Activated CD4-positive, alpha-beta memory T cell treated with anti-CD3 and anti-CD28 coated beads for 36 hours (primary cell): ENCODE measurements at regions of chr3 and their contacts with region 1.

Region 1: GRCh38 chr3:106013971-106014370 is 145.2 kb upstream of the CBLB start:
- DNase-seq: no peak
- H3K4me3 Mint-ChIP-seq: no peak overlapping the region
- H3K27ac Mint-ChIP-seq: peak overlapping the region; percentile 30
- H3K4me1 Mint-ChIP-seq: peaks cover 41% of the 10 kb centered on the region
- H3K27me3 Mint-ChIP-seq: no peaks in the 10 kb centered on the region

Region 2: GRCh38 chr3:105353485-105354161 is 660.3 kb before region 1 on chr3:
- CTCF ChIA-PET with region 1: no interaction called
- POLR2A ChIA-PET with region 1: no interaction called
- intact Hi-C with region 1: no loop called
- DNase-seq: no peak
- H3K4me3 Mint-ChIP-seq: peak overlapping the region; percentile 20
- H3K27ac Mint-ChIP-seq: no peak overlapping the region
- H3K4me1 Mint-ChIP-seq: peaks cover 11% of the 10 kb centered on the region
- H3K27me3 Mint-ChIP-seq: peaks cover 36% of the 10 kb centered on the region

Region 3: GRCh38 chr3:105868742-105869530 is 145.0 kb before region 1 on chr3 and contains the start of gene CBLB:
- CTCF ChIA-PET with region 1: no interaction called
- POLR2A ChIA-PET with region 1: no interaction called
- intact Hi-C with region 1: loop called (anchors 2 kb)
- DNase-seq: peak; percentile 91
- H3K4me3 Mint-ChIP-seq: peak within 1 kb of the TSS; percentile 94
- H3K27ac Mint-ChIP-seq: peak within 1 kb of the TSS; percentile 94
- H3K4me1 Mint-ChIP-seq: peaks cover 38% of the 10 kb centered on the region
- H3K27me3 Mint-ChIP-seq: no peaks in the 10 kb centered on the region
- total RNA-seq, gene CBLB: 86.1 to 88.2 TPM

Region 4: GRCh38 chr3:106068795-106069194 is 54.8 kb after region 1 on chr3:
- CTCF ChIA-PET with region 1: no interaction called
- POLR2A ChIA-PET with region 1: no interaction called
- intact Hi-C with region 1: loop called (anchors 2 kb)
- DNase-seq: no peak
- H3K4me3 Mint-ChIP-seq: no peak overlapping the region
- H3K27ac Mint-ChIP-seq: peak overlapping the region; percentile 14
- H3K4me1 Mint-ChIP-seq: peaks cover 14% of the 10 kb centered on the region
- H3K27me3 Mint-ChIP-seq: no peaks in the 10 kb centered on the region

Region 5: GRCh38 chr3:106206146-106206545 is 192.2 kb after region 1 on chr3:
- CTCF ChIA-PET with region 1: no interaction called
- POLR2A ChIA-PET with region 1: no interaction called
- intact Hi-C with region 1: loop called (anchors 2 kb)
- DNase-seq: peak; percentile 24
- H3K4me3 Mint-ChIP-seq: peak overlapping the region; percentile 9
- H3K27ac Mint-ChIP-seq: peak overlapping the region; percentile 93
- H3K4me1 Mint-ChIP-seq: peaks cover 48% of the 10 kb centered on the region
- H3K27me3 Mint-ChIP-seq: no peaks in the 10 kb centered on the region

Region 6: GRCh38 chr3:106534206-106534605 is 520.2 kb after region 1 on chr3:
- CTCF ChIA-PET with region 1: no interaction called
- POLR2A ChIA-PET with region 1: no interaction called
- intact Hi-C with region 1: loop called (anchors 5 kb)
- DNase-seq: peak; percentile 81
- H3K4me3 Mint-ChIP-seq: peak overlapping the region; percentile 7
- H3K27ac Mint-ChIP-seq: peak overlapping the region; percentile 80
- H3K4me1 Mint-ChIP-seq: peaks cover 27% of the 10 kb centered on the region
- H3K27me3 Mint-ChIP-seq: no peaks in the 10 kb centered on the region